Activated CD8-positive, alpha-beta T cell treated with anti-CD3 and anti-CD28 coated beads for 36 hours (primary cell): ENCODE measurements at regions of chr1 and their contacts with region 1.

Region 1: GRCh38 chr1:55284852-55285251 is 69.7 kb upstream of the USP24 start:
- DNase-seq: peak; percentile 48
- ATAC-seq: no peak
- H3K4me3 Mint-ChIP-seq: no peak overlapping the region
- H3K27ac Mint-ChIP-seq: no peak overlapping the region
- H3K4me1 Mint-ChIP-seq: peaks cover 22% of the 10 kb centered on the region
- H3K27me3 Mint-ChIP-seq: no peaks in the 10 kb centered on the region
- CTCF ChIP-seq: peak; percentile 68

Region 2: GRCh38 chr1:56584910-56585528 is 1300.2 kb after region 1 on chr1:
- CTCF ChIA-PET with region 1: interaction called, 5 read pairs
- POLR2A ChIA-PET with region 1: no interaction called
- intact Hi-C with region 1: loop called (anchors 10 kb)
- DNase-seq: no peak
- ATAC-seq: no peak
- H3K4me3 Mint-ChIP-seq: no peak overlapping the region
- H3K27ac Mint-ChIP-seq: no peak overlapping the region
- H3K4me1 Mint-ChIP-seq: no peaks in the 10 kb centered on the region
- H3K27me3 Mint-ChIP-seq: peaks cover 17% of the 10 kb centered on the region
- CTCF ChIP-seq: peak; percentile 71